Naive thymus-derived CD8-positive, alpha-beta T cell (primary cell): ENCODE measurements at regions of chr6 and their contacts with region 1.

Region 1: DNA sequence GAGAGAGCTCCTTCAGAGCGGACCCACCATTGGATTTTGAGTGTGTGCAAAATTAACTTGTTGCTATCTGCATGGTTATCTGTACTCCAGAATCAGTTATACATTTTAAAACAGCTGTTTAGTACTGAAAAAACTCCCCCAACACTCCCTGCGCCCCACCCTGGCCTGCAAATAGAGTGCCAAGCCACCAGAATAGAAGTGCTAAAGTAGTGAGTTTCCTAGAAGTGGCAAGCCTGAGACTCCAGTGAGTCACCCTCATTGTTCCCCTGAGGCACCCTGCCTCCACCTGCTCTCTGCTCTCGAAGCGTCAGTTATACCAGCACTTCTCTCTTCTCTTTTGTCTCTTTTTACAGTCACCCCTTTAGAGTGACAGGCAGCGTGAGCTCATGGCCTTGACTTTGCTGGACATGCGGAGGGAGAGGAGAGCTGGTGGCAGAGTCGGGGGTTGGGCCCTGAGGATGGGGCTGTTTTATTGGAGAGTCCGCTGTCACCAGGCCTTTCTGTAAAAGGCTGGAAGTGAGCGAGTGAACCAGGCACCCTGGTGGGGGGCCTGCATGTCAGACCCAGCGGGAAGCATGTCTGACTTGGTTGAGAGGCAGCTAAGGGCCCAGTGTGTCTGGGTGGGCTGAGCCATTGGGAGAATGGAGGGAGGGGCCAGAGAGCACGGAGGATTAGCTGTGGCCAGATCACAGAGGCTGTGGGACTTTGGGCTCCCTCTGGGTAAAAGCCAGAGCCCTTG is 10.4 kb downstream of the IGF2R start:
- DNase-seq: peak in 1 of 10 donors; percentile 53
- ATAC-seq: peak; percentile 21 to 60
- H3K4me3 Mint-ChIP-seq: peak overlapping the region in 9 of 10 donors; percentile 16 to 83 (median 59)
- H3K27ac Mint-ChIP-seq: peak overlapping the region; percentile 52 to 95 (median 90)
- H3K4me1 Mint-ChIP-seq: peaks cover 64 to 95% (median 94%) of the 10 kb centered on the region in 4 donors
- H3K27me3 Mint-ChIP-seq: no peaks in the 10 kb centered on the region

Region 2: DNA sequence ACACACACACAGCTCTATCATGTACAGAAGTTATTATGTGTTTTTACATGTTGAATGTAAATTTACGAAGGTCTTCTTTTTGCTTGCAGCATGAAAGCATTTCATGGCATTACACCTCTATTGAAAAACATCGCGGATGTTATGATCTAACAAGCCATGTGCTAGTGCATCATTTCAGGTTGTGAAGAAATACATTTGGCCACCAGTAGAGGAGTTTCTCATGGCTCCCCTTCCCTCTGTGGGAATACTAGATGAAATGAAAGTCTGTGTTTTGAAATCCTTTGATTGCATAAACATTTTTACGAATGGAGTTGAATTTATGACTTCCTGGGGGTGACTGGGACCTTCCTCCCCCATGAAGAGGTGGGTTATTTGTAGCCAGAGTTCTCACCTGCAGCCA is 70.8 kb before region 1 on chr6:
- POLR2A ChIA-PET with region 1: no interaction called
- DNase-seq: no peak
- ATAC-seq: no peak
- H3K4me3 Mint-ChIP-seq: no peak overlapping the region
- H3K27ac Mint-ChIP-seq: no peak overlapping the region
- H3K4me1 Mint-ChIP-seq: peaks cover 0 to 4% (median 0%) of the 10 kb centered on the region in 4 donors
- H3K27me3 Mint-ChIP-seq: peaks cover 15 to 24% (median 21%) of the 10 kb centered on the region in 5 donors

Region 3: DNA sequence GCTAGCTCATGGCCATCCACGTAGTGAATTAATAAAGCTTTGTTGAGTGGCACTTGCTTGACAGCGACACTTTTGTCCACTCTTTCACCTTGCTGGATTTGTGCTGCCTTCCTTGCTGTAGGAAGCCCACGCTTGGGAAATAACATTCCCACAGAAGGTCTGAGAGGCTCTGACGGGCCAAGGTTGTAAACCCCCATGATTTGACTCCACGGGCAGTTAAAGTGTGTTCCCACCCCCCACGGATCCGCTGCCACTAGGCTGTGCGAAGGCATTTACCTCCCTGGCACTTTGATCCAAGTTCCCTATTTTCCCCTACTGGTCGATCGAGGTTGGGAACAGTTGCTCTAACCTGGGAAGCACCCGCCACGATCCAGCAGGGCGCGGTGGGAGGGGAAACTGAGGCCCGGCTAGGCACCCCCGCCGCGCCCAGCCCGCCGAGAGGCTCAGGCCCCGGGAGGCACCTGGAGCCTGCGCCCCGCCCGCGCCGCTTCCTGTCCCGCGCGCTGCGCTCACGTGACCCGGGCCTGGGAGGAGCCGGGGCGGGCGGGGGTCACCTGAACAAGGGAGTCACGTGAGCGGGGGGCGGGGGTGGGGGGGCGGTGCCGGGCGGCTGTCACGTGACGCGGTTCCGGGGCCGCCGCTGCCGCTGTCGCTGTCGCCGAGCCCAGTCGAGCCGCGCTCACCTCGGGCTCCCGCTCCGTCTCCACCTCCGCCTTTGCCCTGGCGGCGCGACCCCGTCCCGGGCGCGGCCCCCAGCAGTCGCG is 10.7 kb before region 1 on chr6 and contains the start of gene IGF2R:
- POLR2A ChIA-PET with region 1: interaction called, 47 read pairs
- DNase-seq: peak; percentile 81 to 96 (median 92)
- ATAC-seq: peak; percentile 85 to 91
- H3K4me3 Mint-ChIP-seq: peak within 1 kb of the TSS; percentile 83 to 97 (median 90)
- H3K27ac Mint-ChIP-seq: peak within 1 kb of the TSS; percentile 83 to 96 (median 92)
- H3K4me1 Mint-ChIP-seq: peaks cover 23 to 48% (median 41%) of the 10 kb centered on the region in 4 donors
- H3K27me3 Mint-ChIP-seq: no peaks in the 10 kb centered on the region
- polyA plus RNA-seq, gene IGF2R: 9.1 to 19.3 (median 13.6) TPM